Left ventricle myocardium superior (tissue), 1 donor: ENCODE measurements at regions of chr12 and their contacts with region 1.

Region 1: GRCh38 chr12:130920736-130921381 is 32.8 kb upstream of the ADGRD1 start:
- DNase-seq: peak; percentile 79
- ATAC-seq: peak; percentile 82

Region 2: DNA sequence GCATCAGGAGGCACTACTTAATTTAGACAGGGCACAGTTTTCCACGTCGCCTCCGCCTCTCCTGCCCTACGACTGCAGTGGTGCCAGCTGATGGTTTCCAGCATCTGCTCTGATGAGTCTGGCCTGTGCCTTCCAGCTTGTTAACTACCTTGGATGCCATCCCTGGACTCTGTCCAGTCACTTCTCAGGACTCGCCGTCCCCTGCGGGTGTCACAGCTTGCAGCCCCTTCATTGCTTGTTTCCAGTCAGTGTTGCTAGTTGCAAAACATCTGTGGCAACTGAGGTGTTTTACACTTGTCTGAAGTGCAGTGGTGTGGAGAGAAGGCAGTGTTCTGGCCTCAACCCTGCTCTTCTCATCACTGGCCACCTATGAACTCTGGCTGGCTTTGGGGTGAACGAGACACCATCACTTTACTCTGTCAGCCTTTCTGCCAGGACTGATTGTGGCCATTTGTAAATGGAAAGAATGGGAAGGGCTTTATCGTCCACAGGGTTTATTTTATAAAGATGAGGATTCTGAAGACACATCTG is 41.1 kb after region 1 on chr12:
- intact Hi-C with region 1: no loop called
- DNase-seq: peak; percentile 85
- ATAC-seq: peak; percentile 94

Region 3: GRCh38 chr12:131092901-131093603 is 172.2 kb after region 1 on chr12:
- intact Hi-C with region 1: no loop called
- DNase-seq: peak; percentile 28
- ATAC-seq: no peak

Region 4: DNA sequence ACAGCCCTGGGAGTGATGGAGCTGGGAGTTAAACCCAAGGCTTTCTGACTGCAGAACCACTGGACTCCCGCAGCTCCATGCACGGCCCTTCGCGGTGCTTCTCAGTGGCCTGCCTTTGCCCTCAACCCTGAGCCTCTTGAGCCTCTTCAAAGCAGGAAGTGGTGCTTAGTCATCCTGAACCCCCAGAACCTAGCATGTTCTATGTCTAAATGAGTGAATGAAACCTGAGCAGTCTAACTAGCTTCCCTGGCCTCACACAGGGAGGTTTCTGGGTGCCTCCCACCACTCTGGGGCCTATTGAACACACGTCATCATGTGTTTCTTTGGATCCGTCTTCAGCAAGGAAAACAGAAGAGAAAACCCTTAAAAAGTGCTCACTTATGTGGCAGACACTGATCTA is 672.1 kb after region 1 on chr12:
- intact Hi-C with region 1: loop called (anchors 10 kb)
- DNase-seq: no peak
- ATAC-seq: no peak